Left ventricle myocardium inferior (tissue), 1 donor: ENCODE measurements at regions of chr2 and their contacts with region 1.

Region 1: DNA sequence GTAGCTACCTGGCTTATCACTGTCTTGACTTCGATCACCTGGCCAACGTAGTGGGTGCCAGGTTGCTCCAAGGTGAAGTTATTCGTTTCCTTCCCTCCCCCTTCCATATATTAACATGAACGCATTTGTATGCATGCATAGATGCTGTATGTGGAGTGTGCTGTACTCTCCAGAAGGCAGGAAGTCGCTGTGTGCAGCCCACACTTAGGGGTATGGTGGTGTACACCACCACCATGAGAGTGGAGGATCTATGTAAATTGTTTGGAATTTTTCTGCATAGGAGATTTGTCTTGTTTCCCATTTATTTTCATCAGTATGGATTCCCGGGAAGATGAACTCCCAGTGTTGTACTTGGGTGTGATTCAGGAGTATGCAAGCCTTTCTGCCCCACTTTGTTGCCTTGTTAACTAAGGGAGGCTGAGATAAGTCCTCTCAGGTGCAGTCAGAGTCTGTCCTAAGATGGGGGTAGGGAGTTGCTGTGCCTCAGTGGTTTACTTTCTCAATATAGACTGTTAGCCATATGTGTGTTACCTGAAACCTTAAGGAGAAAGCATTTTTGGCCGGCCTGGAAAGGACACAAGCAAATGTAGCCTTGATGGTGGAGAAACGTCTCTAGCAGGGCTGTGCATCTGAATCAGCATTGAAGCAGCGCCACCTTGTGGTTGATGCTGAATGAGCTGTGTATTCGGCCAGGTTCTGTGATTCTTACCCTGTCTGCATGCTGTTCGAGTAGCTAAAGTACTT is 149.8 kb downstream of the TANC1 start:
- DNase-seq: peak; percentile 85
- H3K4me3 ChIP-seq: no peak overlapping the region
- H3K27ac ChIP-seq: peak overlapping the region; percentile 84
- H3K4me1 ChIP-seq: peaks cover 77% of the 10 kb centered on the region
- H3K27me3 ChIP-seq: no peaks in the 10 kb centered on the region
- CTCF ChIP-seq: peak; percentile 96

Region 2: DNA sequence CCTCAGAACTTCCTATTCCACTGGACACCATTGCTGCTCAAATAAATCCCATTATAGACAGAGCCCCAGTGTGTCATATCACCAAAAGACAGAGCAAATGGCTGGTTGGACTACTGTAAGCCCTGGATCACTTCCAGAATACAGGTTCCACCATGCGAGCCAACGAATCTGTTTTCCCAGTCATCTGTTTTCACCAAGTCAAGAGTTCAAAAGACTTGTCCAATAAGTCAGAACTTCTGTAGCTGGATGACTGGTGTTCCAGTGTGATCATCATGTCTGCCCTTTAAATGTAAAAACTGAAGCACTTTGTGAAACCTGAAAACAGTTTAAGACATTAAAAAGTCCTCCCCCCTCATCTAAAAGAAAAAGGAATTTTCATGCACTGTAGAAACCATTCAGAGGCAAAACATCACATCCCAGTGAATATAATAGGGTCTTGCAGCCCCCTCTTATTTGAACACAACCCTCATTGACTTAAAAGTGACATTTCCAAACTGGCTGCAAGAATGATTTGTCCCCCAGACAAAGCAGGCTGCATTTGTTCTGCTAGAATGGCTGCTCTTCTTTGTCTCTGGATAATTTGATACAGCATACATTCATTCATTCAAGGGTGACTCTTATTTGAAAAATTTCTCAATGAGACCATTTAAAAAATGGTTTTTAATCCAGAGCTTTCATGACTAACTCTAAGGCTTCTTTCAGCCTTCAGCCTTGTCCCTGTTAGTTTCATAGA is 214.4 kb before region 1 on chr2:
- intact Hi-C with region 1: loop called (anchors 2 kb)
- DNase-seq: no peak
- H3K4me3 ChIP-seq: no peak overlapping the region
- H3K27ac ChIP-seq: no peak overlapping the region
- H3K4me1 ChIP-seq: peaks cover 4% of the 10 kb centered on the region
- H3K27me3 ChIP-seq: no peaks in the 10 kb centered on the region
- CTCF ChIP-seq: no peak

Region 3: DNA sequence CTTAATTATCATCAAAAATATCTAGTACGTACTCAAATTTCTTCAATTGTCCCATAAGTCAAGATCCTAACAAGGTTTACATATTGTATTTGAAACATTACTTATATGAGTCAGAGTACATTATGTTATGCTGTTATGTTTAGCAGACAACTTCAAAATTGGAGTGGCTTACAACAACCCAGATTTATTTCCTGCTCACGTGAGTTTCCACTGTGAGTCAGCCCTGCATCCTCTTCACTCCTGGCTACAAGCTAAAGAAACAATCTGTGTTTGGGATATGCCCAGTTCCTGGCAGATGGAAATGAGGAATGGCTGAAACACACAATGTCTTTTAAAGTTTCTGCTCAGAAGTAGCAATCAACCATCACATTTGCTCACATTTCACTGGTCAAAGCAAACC is 181.3 kb before region 1 on chr2:
- intact Hi-C with region 1: no loop called
- DNase-seq: no peak
- H3K4me3 ChIP-seq: no peak overlapping the region
- H3K27ac ChIP-seq: peak overlapping the region; percentile 62
- H3K4me1 ChIP-seq: peaks cover 25% of the 10 kb centered on the region
- H3K27me3 ChIP-seq: no peaks in the 10 kb centered on the region
- CTCF ChIP-seq: no peak

Region 4: DNA sequence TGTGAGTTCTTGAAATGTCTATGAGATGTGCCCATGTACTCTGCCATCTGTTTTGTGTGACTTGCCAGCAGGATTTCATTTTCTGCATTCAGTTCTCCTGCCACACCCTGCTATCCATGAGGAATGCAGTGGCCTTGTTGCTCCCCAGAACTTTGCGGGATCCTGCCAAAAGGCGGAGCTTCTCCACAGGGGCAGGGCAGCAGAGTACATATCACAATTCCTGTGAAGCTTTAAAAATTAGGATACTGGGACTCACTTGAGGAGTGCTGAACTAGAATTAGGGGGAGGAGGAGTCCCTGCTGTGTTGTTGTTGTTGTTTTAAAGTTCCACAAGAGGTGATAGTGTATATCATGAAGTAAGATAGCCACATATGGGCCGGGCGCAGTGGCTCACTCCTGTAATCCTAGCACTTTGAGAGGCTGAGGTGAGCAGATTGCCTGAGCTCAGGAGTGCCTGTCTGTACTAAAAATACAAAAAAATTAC is 73.4 kb before region 1 on chr2:
- intact Hi-C with region 1: loop called (anchors 10 kb)
- DNase-seq: no peak
- H3K4me3 ChIP-seq: no peak overlapping the region
- H3K27ac ChIP-seq: peak overlapping the region; percentile 64
- H3K4me1 ChIP-seq: peaks cover 90% of the 10 kb centered on the region
- H3K27me3 ChIP-seq: no peaks in the 10 kb centered on the region
- CTCF ChIP-seq: no peak

Region 5: DNA sequence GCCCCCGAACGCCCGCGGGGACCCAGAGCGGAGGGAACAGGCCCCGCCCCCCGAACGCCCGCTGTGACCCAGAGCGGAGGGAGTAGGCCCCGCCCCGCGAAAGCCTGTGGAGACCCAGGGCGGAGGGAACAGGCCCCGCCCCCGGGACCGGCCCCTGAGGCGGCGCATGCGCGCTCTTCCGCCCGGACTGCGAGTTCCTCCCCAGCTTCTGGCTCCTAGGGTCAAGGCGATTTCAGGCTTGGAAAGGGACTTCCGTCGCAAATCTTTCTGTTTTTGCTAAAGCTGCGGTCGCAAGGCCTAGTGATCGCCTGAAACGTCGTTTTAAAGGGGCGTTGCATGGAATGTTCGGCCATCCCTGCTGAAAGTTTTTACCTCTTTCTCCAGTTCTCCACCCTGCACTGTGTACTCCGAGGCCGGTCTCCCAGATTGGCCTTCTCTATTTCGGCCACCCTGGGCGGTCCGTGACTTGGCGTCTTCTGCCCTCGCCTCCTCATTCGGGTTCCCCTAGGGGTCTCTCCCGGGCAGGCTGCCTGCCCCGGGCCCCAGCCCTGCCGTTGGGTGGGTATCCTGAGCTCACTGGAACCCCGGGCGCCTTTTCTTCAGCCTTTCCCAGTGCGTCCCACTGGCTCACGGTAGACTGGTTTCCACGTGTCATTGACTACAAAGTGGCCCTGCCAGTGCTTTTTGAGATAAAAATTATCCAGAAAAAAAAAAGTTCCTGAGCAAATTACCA is 168.6 kb after region 1 on chr2:
- intact Hi-C with region 1: no loop called
- DNase-seq: peak; percentile 99
- H3K4me3 ChIP-seq: peak overlapping the region; percentile 94
- H3K27ac ChIP-seq: peak overlapping the region; percentile 94
- H3K4me1 ChIP-seq: peaks cover 31% of the 10 kb centered on the region
- H3K27me3 ChIP-seq: no peaks in the 10 kb centered on the region
- CTCF ChIP-seq: no peak